Activated CD4-positive, alpha-beta T cell treated with anti-CD3 and anti-CD28 coated beads, Interleukin-2, amount 10 ng/mL, durations not matched to agents 7 days and 5 days (primary cell): ENCODE measurements at regions of chr5 and their contacts with region 1.

Region 1: GRCh38 chr5:139633295-139634027 is 14.7 kb upstream of the CXXC5 start:
- DNase-seq: peak; percentile 69
- H3K4me3 Mint-ChIP-seq: no peak overlapping the region
- H3K27ac Mint-ChIP-seq: no peak overlapping the region
- H3K4me1 Mint-ChIP-seq: peaks cover 49% of the 10 kb centered on the region
- H3K27me3 Mint-ChIP-seq: no peaks in the 10 kb centered on the region

Region 2: GRCh38 chr5:139648205-139649081 is 15.0 kb after region 1 on chr5 and contains the start of gene CXXC5:
- CTCF ChIA-PET with region 1: interaction called, 11 read pairs
- POLR2A ChIA-PET with region 1: interaction called, 3 read pairs
- DNase-seq: peak; percentile 50
- H3K4me3 Mint-ChIP-seq: peak within 1 kb of the TSS; percentile 50
- H3K27ac Mint-ChIP-seq: no peak within 1 kb of the TSS
- H3K4me1 Mint-ChIP-seq: peaks cover 32% of the 10 kb centered on the region
- H3K27me3 Mint-ChIP-seq: peaks cover 73% of the 10 kb centered on the region
- total RNA-seq, gene CXXC5: 0.99 to 1.9 TPM

Region 3: GRCh38 chr5:139690064-139690802 is 56.8 kb after region 1 on chr5:
- CTCF ChIA-PET with region 1: interaction called, 10 read pairs
- POLR2A ChIA-PET with region 1: interaction called, 5 read pairs
- DNase-seq: peak; percentile 44
- H3K4me3 Mint-ChIP-seq: no peak overlapping the region
- H3K27ac Mint-ChIP-seq: no peak overlapping the region
- H3K4me1 Mint-ChIP-seq: no peaks in the 10 kb centered on the region
- H3K27me3 Mint-ChIP-seq: peaks cover 3% of the 10 kb centered on the region

Region 4: GRCh38 chr5:139716966-139717620 is 83.6 kb after region 1 on chr5:
- CTCF ChIA-PET with region 1: no interaction called
- POLR2A ChIA-PET with region 1: no interaction called
- DNase-seq: no peak
- H3K4me3 Mint-ChIP-seq: no peak overlapping the region
- H3K27ac Mint-ChIP-seq: no peak overlapping the region
- H3K4me1 Mint-ChIP-seq: no peaks in the 10 kb centered on the region
- H3K27me3 Mint-ChIP-seq: peaks cover 10% of the 10 kb centered on the region

Region 5: DNA sequence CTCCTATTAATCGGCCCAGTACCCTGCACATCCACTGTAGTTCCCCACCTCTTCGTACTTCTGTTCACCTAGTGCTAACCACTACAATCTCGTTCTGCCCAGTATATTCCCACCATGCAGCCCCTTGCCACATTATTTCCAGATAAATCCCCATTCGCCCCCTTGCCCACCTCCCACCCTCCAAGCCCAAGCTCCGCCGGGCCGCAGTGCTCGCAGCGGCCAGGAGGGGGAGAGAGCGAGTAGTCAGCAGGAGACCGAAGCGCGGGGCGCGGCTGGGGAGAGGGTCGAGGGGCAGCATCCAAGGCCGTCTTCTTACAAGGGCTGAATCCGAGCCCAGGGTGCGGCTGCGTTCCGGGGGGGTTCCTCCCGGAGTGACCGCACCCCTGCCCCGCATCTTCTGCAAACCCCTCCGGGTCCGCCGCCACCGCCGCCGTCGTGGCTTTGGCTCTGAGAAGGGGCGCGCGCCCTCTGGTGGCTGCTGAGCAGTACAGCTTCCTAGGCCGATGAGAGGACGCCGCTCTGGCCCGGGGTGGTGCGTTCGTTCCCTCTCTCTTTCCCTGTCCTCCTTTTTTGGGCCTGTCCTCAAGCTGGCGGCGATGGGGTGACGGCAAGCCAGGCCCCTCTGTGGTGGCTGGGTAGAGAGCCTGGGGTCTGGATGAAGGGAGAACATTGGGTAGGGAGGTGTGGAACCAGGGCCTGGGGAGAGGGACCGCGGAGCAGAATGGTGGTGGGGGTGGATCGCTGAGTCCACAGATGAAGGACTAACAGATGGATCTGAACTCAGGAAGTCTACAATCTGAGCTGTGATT is 132.2 kb after region 1 on chr5:
- CTCF ChIA-PET with region 1: interaction called, 54 read pairs
- POLR2A ChIA-PET with region 1: no interaction called
- DNase-seq: peak; percentile 84
- H3K4me3 Mint-ChIP-seq: peak overlapping the region; percentile 62
- H3K27ac Mint-ChIP-seq: no peak overlapping the region
- H3K4me1 Mint-ChIP-seq: peaks cover 11% of the 10 kb centered on the region
- H3K27me3 Mint-ChIP-seq: peaks cover 41% of the 10 kb centered on the region